Heart right ventricle (tissue), 16 donors: ENCODE measurements at regions of chr21 and their contacts with region 1.

Region 1: GRCh38 chr21:26212211-26212610 is 41.6 kb upstream of the APP start:
- DNase-seq: no peak
- ATAC-seq: no peak
- H3K4me3 ChIP-seq: no peak overlapping the region
- H3K27ac ChIP-seq: no peak overlapping the region
- H3K4me1 ChIP-seq: no peaks in the 10 kb centered on the region
- H3K27me3 ChIP-seq: no peaks in the 10 kb centered on the region
- CTCF ChIP-seq: no peak

Region 2: GRCh38 chr21:25412100-25412499 is 800.1 kb before region 1 on chr21:
- intact Hi-C with region 1: loop called in 1 of 10 experiments (anchors 10 kb)
- DNase-seq: no peak
- ATAC-seq: no peak
- H3K4me3 ChIP-seq: no peak overlapping the region
- H3K27ac ChIP-seq: no peak overlapping the region
- H3K4me1 ChIP-seq: peaks cover 0 to under 1% (median 0%) of the 10 kb centered on the region in 9 donors
- H3K27me3 ChIP-seq: no peaks in the 10 kb centered on the region
- CTCF ChIP-seq: no peak

Region 3: GRCh38 chr21:26490771-26491170 is 278.6 kb after region 1 on chr21:
- intact Hi-C with region 1: no loop called
- DNase-seq: no peak
- ATAC-seq: no peak
- H3K4me3 ChIP-seq: no peak overlapping the region
- H3K27ac ChIP-seq: no peak overlapping the region
- H3K4me1 ChIP-seq: peaks cover 0 to 4% (median 0%) of the 10 kb centered on the region in 9 donors
- H3K27me3 ChIP-seq: no peaks in the 10 kb centered on the region
- CTCF ChIP-seq: no peak